PC-3 (cell line): ENCODE measurements at regions of chr7 and their contacts with region 1.

Region 1: DNA sequence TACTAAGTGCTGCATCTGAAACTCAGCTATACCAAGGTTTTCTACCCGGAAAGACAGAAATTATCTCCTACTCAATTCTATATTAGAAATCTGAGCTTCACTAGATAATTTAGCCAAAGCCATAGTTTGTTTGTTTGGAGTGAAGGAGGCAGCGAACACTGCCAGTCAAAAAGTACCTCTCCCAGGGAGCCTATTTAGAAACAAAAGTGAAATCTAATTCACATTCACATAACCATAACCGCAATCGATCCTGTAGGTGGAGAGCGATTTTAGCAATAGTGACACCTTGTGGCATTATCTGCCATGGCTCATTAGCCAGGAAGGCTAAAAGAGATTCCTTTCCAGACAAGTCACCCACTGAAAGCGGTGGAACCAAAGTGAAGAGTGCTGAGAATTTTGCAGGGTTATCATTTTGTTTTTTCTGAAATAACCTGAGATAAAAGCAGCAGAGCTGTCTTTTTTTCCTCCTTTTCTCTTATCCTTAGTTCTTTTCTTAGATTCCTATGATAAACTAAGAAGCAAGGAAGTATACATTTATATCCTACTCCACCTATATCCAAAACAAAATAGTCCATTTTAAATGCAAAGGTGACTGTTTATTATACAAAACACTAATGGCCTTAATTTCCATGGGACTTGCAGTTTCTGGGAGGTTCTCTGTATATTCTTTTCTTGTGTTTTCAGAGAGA is 83.7 kb upstream of the BET1 start:
- DNase-seq: peak; percentile 81
- ATAC-seq: peak; percentile 93
- H3K4me3 ChIP-seq: peak overlapping the region; percentile 45
- H3K27ac ChIP-seq: no peak overlapping the region
- H3K4me1 ChIP-seq: no peaks in the 10 kb centered on the region
- H3K27me3 ChIP-seq: peaks cover 31% of the 10 kb centered on the region
- CTCF ChIP-seq: peak; percentile 88

Region 2: DNA sequence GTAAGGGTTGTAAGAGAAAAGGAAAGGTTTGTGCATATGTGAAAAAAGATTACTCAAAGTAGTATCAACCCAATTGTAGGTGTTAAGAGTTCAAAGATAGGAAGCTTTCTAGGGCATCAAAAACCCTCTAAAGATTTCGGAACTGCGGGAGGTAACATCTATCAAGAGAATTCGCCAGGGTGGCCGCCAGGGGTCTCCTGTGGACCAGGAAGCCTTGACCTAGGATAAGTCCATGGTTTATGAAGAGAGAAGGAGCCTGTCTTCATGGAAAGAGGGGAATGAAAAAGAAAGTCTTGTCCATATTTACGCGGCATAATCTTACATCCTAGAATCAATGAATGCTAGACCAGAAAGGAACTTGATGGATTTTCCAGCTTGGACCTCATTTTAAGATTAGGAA is 372.6 kb before region 1 on chr7:
- CTCF ChIA-PET with region 1: no interaction called
- POLR2A ChIA-PET with region 1: no interaction called
- intact Hi-C with region 1: loop called (anchors 1 kb)
- DNase-seq: peak; percentile 47
- ATAC-seq: peak; percentile 87
- H3K4me3 ChIP-seq: no peak overlapping the region
- H3K27ac ChIP-seq: no peak overlapping the region
- H3K4me1 ChIP-seq: no peaks in the 10 kb centered on the region
- H3K27me3 ChIP-seq: peaks cover 37% of the 10 kb centered on the region
- CTCF ChIP-seq: peak; percentile 71

Region 3: GRCh38 chr7:93902777-93903423 is 184.9 kb before region 1 on chr7:
- CTCF ChIA-PET with region 1: interaction called, 4 read pairs
- POLR2A ChIA-PET with region 1: no interaction called
- intact Hi-C with region 1: loop called (anchors 1 kb)
- DNase-seq: peak; percentile 52
- ATAC-seq: peak; percentile 81
- H3K4me3 ChIP-seq: no peak overlapping the region
- H3K27ac ChIP-seq: no peak overlapping the region
- H3K4me1 ChIP-seq: no peaks in the 10 kb centered on the region
- H3K27me3 ChIP-seq: peaks cover 4% of the 10 kb centered on the region; the same call in 1 of the 2 replicates
- CTCF ChIP-seq: peak; percentile 85

Region 4: DNA sequence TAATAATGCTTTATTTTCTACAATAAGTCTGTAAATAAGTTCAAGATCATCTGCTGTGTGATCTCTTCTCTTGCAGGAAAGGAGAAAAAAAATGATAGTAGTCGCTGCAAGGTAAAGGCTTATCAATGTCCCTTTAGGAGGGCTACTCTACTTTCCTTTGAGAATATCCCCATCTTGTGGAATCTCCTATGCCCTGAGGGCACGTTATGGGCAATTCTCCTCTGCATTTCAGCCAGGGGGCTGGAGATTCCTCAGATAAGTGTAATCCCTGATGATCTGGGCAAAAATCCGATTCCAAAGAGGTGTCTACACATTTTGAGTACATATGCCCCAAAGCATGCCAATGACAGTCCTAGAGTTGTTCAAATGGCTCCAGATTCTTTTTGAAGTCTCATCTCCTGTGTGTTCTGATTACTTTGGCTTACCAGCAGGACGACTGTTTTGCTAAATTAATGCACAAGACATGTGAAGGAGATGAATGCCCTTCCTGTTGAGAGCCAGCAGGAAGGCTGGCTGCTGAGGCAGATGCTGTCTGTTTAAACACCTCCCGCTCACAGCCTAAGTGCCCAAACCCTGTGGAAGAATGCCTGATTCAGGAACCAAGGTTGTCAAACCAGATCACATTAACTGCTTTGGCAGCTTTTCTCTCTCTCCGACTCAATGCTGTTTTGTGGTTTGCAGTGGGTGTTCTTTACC is 135.7 kb after region 1 on chr7:
- CTCF ChIA-PET with region 1: no interaction called
- POLR2A ChIA-PET with region 1: interaction called, 4 read pairs
- intact Hi-C with region 1: loop called (anchors 2 kb)
- DNase-seq: peak; percentile 63
- ATAC-seq: peak; percentile 74
- H3K4me3 ChIP-seq: no peak overlapping the region
- H3K27ac ChIP-seq: no peak overlapping the region
- H3K4me1 ChIP-seq: no peaks in the 10 kb centered on the region
- H3K27me3 ChIP-seq: no peaks in the 10 kb centered on the region
- CTCF ChIP-seq: peak; percentile 52

Region 5: GRCh38 chr7:94395141-94396036 is 307.6 kb after region 1 on chr7:
- CTCF ChIA-PET with region 1: no interaction called
- POLR2A ChIA-PET with region 1: no interaction called
- intact Hi-C with region 1: loop called (anchors 5 kb)
- DNase-seq: peak; percentile 80
- ATAC-seq: peak; percentile 83
- H3K4me3 ChIP-seq: no peak overlapping the region
- H3K27ac ChIP-seq: no peak overlapping the region
- H3K4me1 ChIP-seq: peaks cover 2% of the 10 kb centered on the region; the same call in 1 of the 2 replicates
- H3K27me3 ChIP-seq: no peaks in the 10 kb centered on the region
- CTCF ChIP-seq: peak; percentile 89